ENCODE measurements at regions of chr22 and their contacts with region 1.

Region 1: GRCh38 chr22:35064664-35065063 is 1.3 kb upstream of the ISX start:
- DNase-seq: peak; percentile 57
- CTCF ChIP-seq: no peak

Region 2: DNA sequence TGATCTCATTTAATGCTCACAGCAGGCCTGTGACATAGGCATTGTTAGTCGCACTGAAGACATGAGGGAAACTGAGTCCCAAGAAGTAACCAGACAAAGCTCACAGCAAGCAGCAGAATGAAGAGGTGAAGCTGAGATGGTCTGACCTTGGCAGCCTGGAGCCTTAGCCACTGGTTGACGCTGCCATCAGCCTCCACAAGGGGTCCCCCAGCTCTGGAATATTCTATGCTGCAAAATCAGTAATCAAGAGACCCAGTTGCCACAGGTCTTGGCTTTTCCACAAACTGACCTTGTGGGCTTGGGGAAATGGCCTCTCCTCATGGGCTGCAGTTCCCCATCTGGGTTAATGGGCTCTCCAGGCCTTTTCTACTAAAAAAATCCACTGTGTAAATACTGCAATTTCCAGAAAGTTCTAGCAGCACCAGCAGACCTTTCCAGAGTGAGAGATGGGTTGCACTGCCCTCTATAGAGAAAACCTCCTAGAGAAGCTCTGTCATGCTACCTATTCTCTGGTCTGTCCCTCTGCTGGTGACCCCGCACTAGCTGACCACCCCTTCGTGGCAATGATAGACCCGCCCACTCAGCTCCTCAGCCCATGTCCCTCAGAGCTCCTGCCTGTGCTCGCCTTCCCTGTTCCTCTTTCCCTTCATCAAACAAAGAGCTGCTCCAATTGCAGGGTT is 21.3 kb before region 1 on chr22:
- CTCF ChIA-PET with region 1: interaction called, 10 read pairs
- POLR2A ChIA-PET with region 1: no interaction called
- DNase-seq: peak; percentile 39
- CTCF ChIP-seq: peak; percentile 59

Region 3: DNA sequence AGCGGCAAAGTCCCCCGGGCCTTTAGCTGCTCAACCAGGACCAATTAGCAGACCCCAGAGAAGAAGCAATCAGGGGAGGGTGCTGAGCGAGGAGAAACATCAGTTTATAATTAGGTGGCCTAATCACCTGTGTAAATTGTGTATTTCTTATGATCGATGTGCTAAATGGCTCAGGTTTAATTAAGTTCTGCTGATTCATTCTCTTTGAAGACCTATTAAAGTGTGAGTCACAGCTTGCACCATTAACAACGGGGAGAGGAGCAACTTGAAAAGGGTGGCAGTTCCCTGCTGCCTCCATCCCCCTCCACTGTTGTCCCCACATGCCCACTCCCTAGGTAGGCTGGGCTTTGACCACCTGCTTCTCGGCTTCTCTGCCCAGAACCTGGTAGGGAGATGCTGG is 12.0 kb after region 1 on chr22:
- CTCF ChIA-PET with region 1: interaction called, 20 read pairs
- POLR2A ChIA-PET with region 1: no interaction called
- DNase-seq: no peak
- CTCF ChIP-seq: no peak

Region 4: DNA sequence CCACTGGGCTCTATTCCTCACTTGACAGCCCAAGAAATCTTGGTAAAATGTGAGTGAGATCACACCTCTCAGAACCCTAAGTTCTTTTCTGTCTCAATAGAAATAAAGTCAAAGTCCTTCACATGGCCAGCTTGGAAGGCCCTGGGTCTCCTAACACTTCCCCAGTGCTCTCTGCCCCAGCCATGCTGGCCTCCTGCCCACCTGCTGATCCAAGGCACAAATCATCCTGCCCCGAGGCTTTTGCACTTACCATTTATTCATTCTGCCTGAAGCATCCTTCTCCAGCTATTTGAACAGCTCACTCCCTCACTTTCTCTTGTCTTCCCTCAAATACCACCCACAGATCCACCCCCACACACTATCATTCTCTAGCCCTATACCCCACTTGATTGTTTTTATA is 27.7 kb after region 1 on chr22:
- CTCF ChIA-PET with region 1: no interaction called
- POLR2A ChIA-PET with region 1: no interaction called
- DNase-seq: no peak
- CTCF ChIP-seq: no peak

Measured in GM10248 (cell line).